Activated B cell treated with CpG ODN at 0.5 μM for 24 hours (primary cell): ENCODE measurements at regions of chr18 and their contacts with region 1.

Region 1: GRCh38 chr18:36015629-36016028 is 43.1 kb downstream of the RMP24 start:
- DNase-seq: no peak
- ATAC-seq: peak; percentile 75
- H3K4me3 Mint-ChIP-seq: no peak overlapping the region
- H3K27ac Mint-ChIP-seq: peak overlapping the region; percentile 12
- H3K4me1 Mint-ChIP-seq: peaks cover 26% of the 10 kb centered on the region
- H3K27me3 Mint-ChIP-seq: no peaks in the 10 kb centered on the region
- CTCF ChIP-seq: no peak

Region 2: DNA sequence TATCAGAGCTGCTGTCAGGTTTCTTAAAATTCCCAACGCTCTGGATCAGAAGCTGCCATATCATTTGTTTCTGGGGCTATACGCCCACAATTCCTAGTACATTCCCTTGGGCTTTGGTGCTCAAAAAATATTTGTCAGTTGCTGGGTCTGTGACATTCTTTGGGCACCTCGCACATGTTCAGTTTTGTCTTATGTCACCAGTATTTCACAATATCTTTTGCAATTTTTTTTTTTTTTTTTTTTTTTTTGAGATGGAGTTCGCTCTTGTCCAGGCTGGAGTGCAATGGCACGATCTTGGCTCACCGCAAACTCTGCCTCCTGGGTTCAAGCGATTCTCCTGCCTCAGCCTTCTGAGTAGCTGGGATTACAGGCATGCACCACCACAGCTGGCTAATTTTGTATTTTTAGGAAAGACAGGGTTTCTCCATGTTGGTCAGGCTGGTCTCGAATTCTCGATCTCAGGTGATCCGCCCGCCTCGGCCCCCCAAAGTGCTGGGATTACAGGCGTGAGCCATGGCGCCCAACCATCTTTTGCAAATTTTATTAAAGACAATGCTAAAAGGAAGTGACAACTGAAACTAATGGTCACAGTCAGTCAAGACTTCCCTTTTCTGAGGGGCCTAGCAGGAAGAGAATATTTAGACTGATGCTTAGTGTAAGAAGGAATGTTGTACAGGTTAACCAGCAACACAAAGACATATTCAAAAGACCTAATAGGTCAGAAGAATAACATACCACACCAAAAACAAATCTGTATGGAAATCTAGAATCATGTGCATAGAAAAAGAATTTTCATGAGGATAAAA is 768.0 kb before region 1 on chr18:
- CTCF ChIA-PET with region 1: no interaction called
- POLR2A ChIA-PET with region 1: no interaction called
- intact Hi-C with region 1: no loop called
- DNase-seq: no peak
- ATAC-seq: peak; percentile 94
- H3K4me3 Mint-ChIP-seq: peak overlapping the region; percentile 60
- H3K27ac Mint-ChIP-seq: peak overlapping the region; percentile 90
- H3K4me1 Mint-ChIP-seq: peaks cover 43% of the 10 kb centered on the region
- H3K27me3 Mint-ChIP-seq: no peaks in the 10 kb centered on the region
- CTCF ChIP-seq: no peak

Region 3: DNA sequence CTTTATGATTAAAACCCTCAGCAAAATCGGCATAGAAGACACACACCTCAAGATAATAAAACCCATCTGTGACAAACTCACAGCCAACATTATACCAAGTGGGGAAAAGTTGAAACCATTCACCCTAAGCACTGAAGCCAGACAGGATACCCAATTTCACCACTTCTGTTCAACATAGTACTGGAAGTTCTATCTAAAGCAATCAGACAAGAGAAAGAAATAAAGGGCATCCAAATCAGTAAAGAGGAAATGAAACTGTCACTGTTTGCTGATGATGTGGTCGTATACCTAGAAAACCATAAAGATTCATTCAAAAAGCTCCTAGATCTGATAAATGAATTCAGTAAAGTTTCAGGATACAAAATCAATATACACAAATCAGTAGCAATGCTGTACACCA is 68.1 kb after region 1 on chr18:
- CTCF ChIA-PET with region 1: interaction called, 4 read pairs
- POLR2A ChIA-PET with region 1: no interaction called
- intact Hi-C with region 1: loop called (anchors 5 kb)
- DNase-seq: no peak
- ATAC-seq: peak; percentile 34
- H3K4me3 Mint-ChIP-seq: no peak overlapping the region
- H3K27ac Mint-ChIP-seq: no peak overlapping the region
- H3K4me1 Mint-ChIP-seq: peaks cover 28% of the 10 kb centered on the region
- H3K27me3 Mint-ChIP-seq: no peaks in the 10 kb centered on the region
- CTCF ChIP-seq: no peak

Region 4: DNA sequence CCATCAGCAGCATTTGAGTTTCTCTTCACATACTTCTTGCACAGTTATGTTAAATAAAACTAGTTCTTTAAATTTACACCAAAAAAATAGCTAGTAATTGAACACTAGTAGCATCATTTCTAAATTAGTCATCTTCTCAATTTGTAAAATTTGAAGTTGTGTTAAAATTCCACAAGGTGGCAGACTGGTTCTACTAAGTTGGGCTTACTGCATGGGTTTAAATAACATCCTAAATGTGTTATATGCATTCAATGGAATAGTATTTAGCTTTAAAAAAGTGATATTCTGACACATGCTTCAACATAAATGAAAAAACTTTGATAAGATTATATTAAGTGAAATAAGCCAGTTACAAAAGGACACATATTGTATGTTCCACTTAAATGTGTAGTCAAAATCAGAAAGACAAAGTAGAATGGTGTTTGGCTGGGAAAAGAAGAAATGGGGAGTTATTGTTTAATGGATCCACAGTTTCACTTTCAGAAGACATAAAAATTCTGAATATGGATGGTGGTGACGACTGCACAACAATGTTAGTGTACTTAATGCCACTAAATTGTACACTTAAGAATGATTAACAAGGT is 80.4 kb after region 1 on chr18:
- CTCF ChIA-PET with region 1: interaction called, 20 read pairs
- POLR2A ChIA-PET with region 1: no interaction called
- intact Hi-C with region 1: loop called (anchors 1 kb)
- DNase-seq: no peak
- ATAC-seq: no peak
- H3K4me3 Mint-ChIP-seq: no peak overlapping the region
- H3K27ac Mint-ChIP-seq: no peak overlapping the region
- H3K4me1 Mint-ChIP-seq: no peaks in the 10 kb centered on the region
- H3K27me3 Mint-ChIP-seq: peaks cover 5% of the 10 kb centered on the region
- CTCF ChIP-seq: no peak

Region 5: DNA sequence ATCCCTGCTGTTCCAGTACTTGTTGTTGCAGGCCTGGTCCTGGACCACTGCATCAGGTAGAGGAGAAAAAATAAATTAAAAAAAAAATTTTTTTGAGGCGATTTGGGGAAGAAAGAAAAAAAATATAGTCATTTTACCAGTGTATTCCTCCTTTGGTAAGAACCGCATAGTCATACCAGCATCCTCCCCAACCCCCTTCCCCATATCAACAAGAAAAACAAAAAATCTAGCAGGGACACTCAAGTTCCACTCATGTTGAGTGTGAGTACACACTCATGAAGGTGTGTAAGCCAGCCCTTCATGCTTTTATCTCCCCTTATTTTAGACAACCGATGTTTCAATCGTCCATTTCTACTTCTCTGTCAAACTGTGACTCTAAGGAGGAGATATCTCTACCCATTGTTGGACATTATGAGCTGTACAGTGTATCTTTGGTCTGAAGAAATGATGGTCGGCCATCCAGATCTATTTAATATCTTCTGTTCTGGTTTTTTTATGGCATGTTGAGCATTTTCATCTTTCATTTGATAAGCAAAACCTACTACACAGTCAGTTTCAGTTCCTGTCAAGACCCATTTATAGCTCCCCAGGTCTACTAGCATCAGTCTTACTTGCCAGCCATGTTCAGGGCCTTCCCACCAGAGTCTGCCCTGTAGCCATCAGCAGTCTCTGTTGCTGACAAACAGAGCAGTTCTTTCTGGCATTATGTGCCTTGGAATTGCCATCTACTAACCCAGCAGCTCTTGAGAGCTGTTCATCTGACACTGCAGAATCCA is 134.1 kb after region 1 on chr18:
- CTCF ChIA-PET with region 1: interaction called, 5 read pairs
- POLR2A ChIA-PET with region 1: no interaction called
- intact Hi-C with region 1: loop called (anchors 1 kb)
- DNase-seq: no peak
- ATAC-seq: peak; percentile 98
- H3K4me3 Mint-ChIP-seq: peak overlapping the region; percentile 61
- H3K27ac Mint-ChIP-seq: peak overlapping the region; percentile 89
- H3K4me1 Mint-ChIP-seq: peaks cover 54% of the 10 kb centered on the region
- H3K27me3 Mint-ChIP-seq: no peaks in the 10 kb centered on the region
- CTCF ChIP-seq: no peak

Region 6: DNA sequence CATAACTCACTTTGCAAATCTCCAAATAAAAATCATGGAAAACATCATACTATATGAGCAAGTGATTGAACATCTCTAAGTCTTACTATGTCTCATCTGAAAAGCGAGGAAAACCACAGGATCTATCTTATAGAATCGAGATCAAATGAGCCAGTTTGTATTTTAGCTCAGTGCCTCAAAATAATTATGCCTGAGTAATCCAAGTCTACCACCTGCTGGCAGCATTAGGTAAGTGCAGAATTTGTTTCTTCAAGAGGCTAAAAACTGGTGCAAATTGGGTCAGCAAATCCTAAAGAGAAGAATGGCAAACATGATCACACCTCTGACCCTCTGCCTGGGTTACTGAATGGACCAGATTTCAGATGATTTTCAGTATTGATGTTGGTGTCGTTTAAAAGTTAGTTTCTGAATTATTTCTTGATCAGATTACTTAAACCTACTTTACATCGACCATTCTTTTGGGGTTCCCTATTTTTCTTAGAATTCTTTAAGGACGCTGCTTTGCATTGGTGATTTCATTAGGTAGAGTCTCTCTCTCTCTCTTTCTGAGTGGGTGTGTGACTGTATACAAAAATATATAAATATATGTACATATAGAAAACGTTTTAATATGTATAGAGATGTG is 269.2 kb after region 1 on chr18:
- CTCF ChIA-PET with region 1: interaction called, 136 read pairs
- POLR2A ChIA-PET with region 1: interaction called, 5 read pairs
- intact Hi-C with region 1: loop called (anchors 1 kb)
- DNase-seq: no peak
- ATAC-seq: peak; percentile 64
- H3K4me3 Mint-ChIP-seq: no peak overlapping the region
- H3K27ac Mint-ChIP-seq: no peak overlapping the region
- H3K4me1 Mint-ChIP-seq: peaks cover 2% of the 10 kb centered on the region
- H3K27me3 Mint-ChIP-seq: peaks cover 38% of the 10 kb centered on the region
- CTCF ChIP-seq: peak; percentile 72

Region 7: GRCh38 chr18:36809590-36810381 is 794.2 kb after region 1 on chr18:
- CTCF ChIA-PET with region 1: interaction called, 6 read pairs
- POLR2A ChIA-PET with region 1: no interaction called
- intact Hi-C with region 1: loop called (anchors 1 kb)
- DNase-seq: no peak
- ATAC-seq: peak; percentile 83
- H3K4me3 Mint-ChIP-seq: no peak overlapping the region
- H3K27ac Mint-ChIP-seq: no peak overlapping the region
- H3K4me1 Mint-ChIP-seq: peaks cover 2% of the 10 kb centered on the region
- H3K27me3 Mint-ChIP-seq: no peaks in the 10 kb centered on the region
- CTCF ChIP-seq: peak; percentile 65